Natural killer cell (primary cell): ENCODE measurements at regions of chr19 and their contacts with region 1.

Region 1: DNA sequence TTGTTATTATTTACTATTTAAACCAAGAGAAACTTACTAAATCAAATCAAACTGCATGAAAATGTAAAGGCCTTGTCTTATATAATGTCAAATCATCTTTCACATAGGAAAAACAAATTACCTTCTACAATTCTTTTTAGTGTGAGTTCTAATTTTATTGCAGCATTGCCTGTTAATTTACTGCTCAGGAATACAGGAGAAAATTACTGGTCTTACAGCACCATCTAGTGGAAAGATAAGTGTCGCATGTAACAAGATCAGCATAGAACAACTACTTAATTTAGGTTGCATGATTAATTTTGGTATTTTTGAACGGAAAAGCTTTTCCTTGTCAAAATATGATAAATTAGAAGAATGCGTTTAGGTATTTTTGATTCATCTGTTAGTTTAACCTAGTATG is 502.7 kb downstream of the UQCRFS1 start:
- DNase-seq: peak in 1 of 2 donors; percentile 76
- ATAC-seq: peak in 2 of 3 donors; percentile 46 to 67
- H3K4me3 ChIP-seq: no peak overlapping the region
- H3K4me3 Mint-ChIP-seq: no peak overlapping the region
- H3K27ac ChIP-seq: no peak overlapping the region
- H3K27ac Mint-ChIP-seq: no peak overlapping the region
- H3K4me1 ChIP-seq: peaks cover 15% of the 10 kb centered on the region
- H3K4me1 Mint-ChIP-seq: peaks cover 16 to 18% of the 10 kb centered on the region in 2 donors
- H3K27me3 ChIP-seq: no peaks in the 10 kb centered on the region
- H3K27me3 Mint-ChIP-seq: peaks cover 0 to 16% of the 10 kb centered on the region in 2 donors
- CTCF ChIP-seq: peak; percentile 93

Region 2: GRCh38 chr19:27774827-27775226 is 935.5 kb before region 1 on chr19:
- intact Hi-C with region 1: loop called (anchors 10 kb)
- DNase-seq: peak in 1 of 2 donors; percentile 11
- ATAC-seq: no peak
- H3K4me3 ChIP-seq: no peak overlapping the region
- H3K4me3 Mint-ChIP-seq: no peak overlapping the region
- H3K27ac ChIP-seq: no peak overlapping the region
- H3K27ac Mint-ChIP-seq: no peak overlapping the region
- H3K4me1 ChIP-seq: no peaks in the 10 kb centered on the region
- H3K4me1 Mint-ChIP-seq: no peaks in the 10 kb centered on the region
- H3K27me3 ChIP-seq: no peaks in the 10 kb centered on the region
- H3K27me3 Mint-ChIP-seq: no peaks in the 10 kb centered on the region
- CTCF ChIP-seq: peak; percentile 19

Region 3: DNA sequence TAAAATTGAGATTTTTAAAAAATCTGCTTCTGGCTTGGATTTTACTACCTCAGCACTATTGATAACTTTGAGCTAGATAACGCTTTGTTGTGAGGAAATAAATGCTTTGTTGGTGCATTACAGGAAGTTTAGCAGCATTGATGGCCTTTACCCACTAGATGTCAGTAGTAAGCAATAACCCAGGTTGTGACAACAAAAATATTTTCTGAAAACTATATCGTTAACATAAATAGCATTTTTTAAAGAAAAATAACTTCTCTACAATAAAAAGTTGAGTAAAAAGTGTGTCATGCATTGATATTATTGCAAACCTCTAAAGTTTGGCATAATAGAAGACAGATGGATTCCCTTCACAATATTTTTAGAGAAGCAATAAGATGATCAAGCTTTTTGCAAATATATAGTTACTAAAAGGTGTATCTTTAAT is 743.9 kb before region 1 on chr19:
- intact Hi-C with region 1: loop called (anchors 1 kb)
- DNase-seq: peak in 1 of 2 donors; percentile 11
- ATAC-seq: no peak
- H3K4me3 ChIP-seq: no peak overlapping the region
- H3K4me3 Mint-ChIP-seq: no peak overlapping the region
- H3K27ac ChIP-seq: no peak overlapping the region
- H3K27ac Mint-ChIP-seq: no peak overlapping the region
- H3K4me1 ChIP-seq: no peaks in the 10 kb centered on the region
- H3K4me1 Mint-ChIP-seq: no peaks in the 10 kb centered on the region
- H3K27me3 ChIP-seq: no peaks in the 10 kb centered on the region
- H3K27me3 Mint-ChIP-seq: peaks cover 3 to 13% of the 10 kb centered on the region in 2 donors
- CTCF ChIP-seq: peak; percentile 61

Region 4: GRCh38 chr19:28242297-28242927 is 467.9 kb before region 1 on chr19:
- intact Hi-C with region 1: loop called (anchors 2 kb)
- DNase-seq: peak in 1 of 2 donors; percentile 45
- ATAC-seq: peak in 2 of 3 donors; percentile 36 to 74
- H3K4me3 ChIP-seq: no peak overlapping the region
- H3K4me3 Mint-ChIP-seq: no peak overlapping the region
- H3K27ac ChIP-seq: no peak overlapping the region
- H3K27ac Mint-ChIP-seq: no peak overlapping the region
- H3K4me1 ChIP-seq: no peaks in the 10 kb centered on the region
- H3K4me1 Mint-ChIP-seq: no peaks in the 10 kb centered on the region
- H3K27me3 ChIP-seq: no peaks in the 10 kb centered on the region
- H3K27me3 Mint-ChIP-seq: peaks cover 12 to 13% of the 10 kb centered on the region in 2 donors
- CTCF ChIP-seq: peak; percentile 73

Region 5: GRCh38 chr19:28324275-28325060 is 385.8 kb before region 1 on chr19:
- intact Hi-C with region 1: loop called (anchors 2 kb)
- DNase-seq: no peak
- ATAC-seq: no peak
- H3K4me3 ChIP-seq: no peak overlapping the region
- H3K4me3 Mint-ChIP-seq: no peak overlapping the region
- H3K27ac ChIP-seq: no peak overlapping the region
- H3K27ac Mint-ChIP-seq: no peak overlapping the region
- H3K4me1 ChIP-seq: peaks cover 3% of the 10 kb centered on the region
- H3K4me1 Mint-ChIP-seq: peaks cover 0 to 7% of the 10 kb centered on the region in 2 donors
- H3K27me3 ChIP-seq: no peaks in the 10 kb centered on the region
- H3K27me3 Mint-ChIP-seq: peaks cover 0 to 2% of the 10 kb centered on the region in 2 donors
- CTCF ChIP-seq: no peak

Region 6: GRCh38 chr19:28466107-28467045 is 243.9 kb before region 1 on chr19:
- intact Hi-C with region 1: loop called (anchors 1 kb)
- DNase-seq: peak; percentile 78 to 79
- ATAC-seq: peak; percentile 37 to 60 (median 58)
- H3K4me3 ChIP-seq: no peak overlapping the region
- H3K4me3 Mint-ChIP-seq: no peak overlapping the region
- H3K27ac ChIP-seq: no peak overlapping the region
- H3K27ac Mint-ChIP-seq: peak overlapping the region in 1 of 2 donors; percentile 50
- H3K4me1 ChIP-seq: peaks cover 47% of the 10 kb centered on the region
- H3K4me1 Mint-ChIP-seq: peaks cover 53 to 63% of the 10 kb centered on the region in 2 donors
- H3K27me3 ChIP-seq: no peaks in the 10 kb centered on the region
- H3K27me3 Mint-ChIP-seq: no peaks in the 10 kb centered on the region
- CTCF ChIP-seq: peak; percentile 89

Region 7: DNA sequence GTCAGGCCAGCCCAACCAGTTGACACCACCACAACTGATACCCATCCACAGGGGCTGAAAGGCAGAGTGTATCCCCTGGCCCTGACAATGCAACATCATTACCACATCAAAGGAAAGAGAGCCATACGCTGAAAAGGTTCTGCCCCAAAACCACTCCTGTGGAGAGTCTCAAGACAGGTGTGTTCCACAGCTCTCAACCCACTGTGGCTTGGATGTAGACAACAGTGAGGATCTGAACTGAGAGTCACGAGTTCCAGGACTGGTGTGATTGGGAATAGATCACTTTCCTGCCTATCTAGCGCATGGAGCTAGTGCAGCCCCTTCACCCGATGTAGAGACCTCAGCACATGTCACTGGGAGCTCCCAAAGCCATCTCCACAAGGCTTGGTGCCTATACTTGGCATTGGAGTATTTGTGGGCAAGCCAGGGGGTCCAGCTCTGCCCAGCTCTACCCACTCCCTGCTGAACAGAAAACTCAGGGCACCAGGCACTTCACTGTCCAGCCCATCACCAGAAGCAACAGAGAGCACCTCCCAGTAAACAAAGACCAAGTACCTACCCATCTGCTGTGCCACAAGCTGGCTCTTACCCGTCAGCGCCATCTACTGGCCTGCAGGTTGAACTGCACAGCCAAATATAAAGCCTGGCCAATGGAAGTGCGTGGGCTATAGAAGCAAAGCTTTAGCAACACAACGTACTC is 76.8 kb before region 1 on chr19:
- intact Hi-C with region 1: loop called (anchors 2 kb)
- DNase-seq: peak; percentile 70 to 74
- ATAC-seq: peak; percentile 94 to 97 (median 96)
- H3K4me3 ChIP-seq: no peak overlapping the region
- H3K4me3 Mint-ChIP-seq: peak overlapping the region; percentile 47
- H3K27ac ChIP-seq: peak overlapping the region; percentile 40
- H3K27ac Mint-ChIP-seq: peak overlapping the region; percentile 39 to 86
- H3K4me1 ChIP-seq: peaks cover 23% of the 10 kb centered on the region
- H3K4me1 Mint-ChIP-seq: peaks cover 27 to 39% of the 10 kb centered on the region in 2 donors
- H3K27me3 ChIP-seq: no peaks in the 10 kb centered on the region
- H3K27me3 Mint-ChIP-seq: peaks cover 0 to 5% of the 10 kb centered on the region in 2 donors
- CTCF ChIP-seq: peak; percentile 98